ENCODE measurements at regions of chr12 and their contacts with region 1.

Region 1: GRCh38 chr12:124036674-124037109 is 63.7 kb downstream of the ZNF664 start:
- DNase-seq: peak; percentile 50
- H3K4me3 Mint-ChIP-seq: no peak overlapping the region
- H3K27ac Mint-ChIP-seq: no peak overlapping the region
- H3K4me1 Mint-ChIP-seq: peaks cover 5% of the 10 kb centered on the region
- H3K27me3 Mint-ChIP-seq: peaks cover 35% of the 10 kb centered on the region
- CTCF ChIP-seq: peak; percentile 74

Region 2: GRCh38 chr12:123655420-123655819 is 381.3 kb before region 1 on chr12:
- CTCF ChIA-PET with region 1: no interaction called
- intact Hi-C with region 1: no loop called
- DNase-seq: no peak
- H3K4me3 Mint-ChIP-seq: no peak overlapping the region
- H3K27ac Mint-ChIP-seq: no peak overlapping the region
- H3K4me1 Mint-ChIP-seq: no peaks in the 10 kb centered on the region
- H3K27me3 Mint-ChIP-seq: no peaks in the 10 kb centered on the region
- CTCF ChIP-seq: no peak

Region 3: GRCh38 chr12:123801573-123802178 is 235.0 kb before region 1 on chr12:
- CTCF ChIA-PET with region 1: no interaction called
- intact Hi-C with region 1: loop called (anchors 1 kb)
- DNase-seq: no peak
- H3K4me3 Mint-ChIP-seq: no peak overlapping the region
- H3K27ac Mint-ChIP-seq: no peak overlapping the region
- H3K4me1 Mint-ChIP-seq: no peaks in the 10 kb centered on the region
- H3K27me3 Mint-ChIP-seq: peaks cover 46% of the 10 kb centered on the region
- CTCF ChIP-seq: peak; percentile 42

Region 4: GRCh38 chr12:123905319-123905925 is 131.3 kb before region 1 on chr12:
- CTCF ChIA-PET with region 1: interaction called, 13 read pairs
- intact Hi-C with region 1: loop called (anchors 1 kb)
- DNase-seq: peak; percentile 74
- H3K4me3 Mint-ChIP-seq: no peak overlapping the region
- H3K27ac Mint-ChIP-seq: no peak overlapping the region
- H3K4me1 Mint-ChIP-seq: peaks cover 8% of the 10 kb centered on the region
- H3K27me3 Mint-ChIP-seq: peaks cover 91% of the 10 kb centered on the region
- CTCF ChIP-seq: peak; percentile 78

Region 5: GRCh38 chr12:124321040-124321481 is 284.4 kb after region 1 on chr12:
- CTCF ChIA-PET with region 1: interaction called, 3 read pairs
- intact Hi-C with region 1: loop called (anchors 1 kb)
- DNase-seq: peak; percentile 88
- H3K4me3 Mint-ChIP-seq: no peak overlapping the region
- H3K27ac Mint-ChIP-seq: no peak overlapping the region
- H3K4me1 Mint-ChIP-seq: no peaks in the 10 kb centered on the region
- H3K27me3 Mint-ChIP-seq: peaks cover 41% of the 10 kb centered on the region
- CTCF ChIP-seq: peak; percentile 87

Region 6: DNA sequence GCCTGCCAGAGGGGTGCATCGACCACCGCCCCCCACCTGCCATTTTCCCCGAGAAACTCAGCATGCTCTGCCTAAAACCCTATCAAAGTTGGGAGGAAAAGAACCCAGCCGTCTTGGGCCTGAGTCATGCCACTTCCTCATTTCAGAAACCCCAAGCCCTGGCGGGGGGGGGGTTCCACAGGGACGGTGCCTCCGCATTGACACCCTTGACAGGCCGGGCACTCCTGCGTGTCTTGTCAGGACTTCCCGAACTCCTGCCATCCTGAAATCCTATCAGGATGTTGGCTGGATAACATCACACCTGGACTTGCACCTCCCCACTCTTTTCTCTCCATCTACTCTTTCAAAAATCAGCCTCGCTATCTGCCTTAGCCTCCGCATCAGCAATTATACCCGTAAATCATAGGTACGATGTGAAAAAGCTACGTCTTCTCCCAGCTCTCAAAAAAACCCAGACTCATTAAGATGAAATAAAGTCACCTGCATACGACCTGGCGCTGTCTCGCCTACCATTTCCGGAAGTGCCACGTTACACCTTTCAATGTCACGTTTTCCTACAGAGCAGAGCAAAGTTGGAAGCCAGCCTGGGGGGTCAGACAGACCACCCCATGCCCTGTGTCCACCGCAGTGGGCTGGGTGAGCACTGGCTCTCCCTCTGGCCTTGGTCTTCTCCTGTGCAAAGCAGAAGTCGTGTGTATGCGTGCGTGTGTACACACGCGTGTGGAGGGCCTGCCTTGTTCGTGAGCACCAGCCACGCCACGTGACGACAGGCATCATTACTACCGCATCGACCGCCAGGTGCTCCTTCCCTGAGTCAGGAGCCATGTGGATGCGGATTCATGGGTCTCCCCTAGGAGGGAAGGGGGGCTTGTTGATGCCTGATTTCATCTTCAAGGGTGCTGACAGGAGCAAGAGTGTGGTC is 354.9 kb after region 1 on chr12:
- CTCF ChIA-PET with region 1: no interaction called
- intact Hi-C with region 1: loop called (anchors 10 kb)
- DNase-seq: peak; percentile 39
- H3K4me3 Mint-ChIP-seq: peak overlapping the region; percentile 8
- H3K27ac Mint-ChIP-seq: peak overlapping the region; percentile 67
- H3K4me1 Mint-ChIP-seq: peaks cover 43% of the 10 kb centered on the region
- H3K27me3 Mint-ChIP-seq: no peaks in the 10 kb centered on the region
- CTCF ChIP-seq: no peak

Region 7: DNA sequence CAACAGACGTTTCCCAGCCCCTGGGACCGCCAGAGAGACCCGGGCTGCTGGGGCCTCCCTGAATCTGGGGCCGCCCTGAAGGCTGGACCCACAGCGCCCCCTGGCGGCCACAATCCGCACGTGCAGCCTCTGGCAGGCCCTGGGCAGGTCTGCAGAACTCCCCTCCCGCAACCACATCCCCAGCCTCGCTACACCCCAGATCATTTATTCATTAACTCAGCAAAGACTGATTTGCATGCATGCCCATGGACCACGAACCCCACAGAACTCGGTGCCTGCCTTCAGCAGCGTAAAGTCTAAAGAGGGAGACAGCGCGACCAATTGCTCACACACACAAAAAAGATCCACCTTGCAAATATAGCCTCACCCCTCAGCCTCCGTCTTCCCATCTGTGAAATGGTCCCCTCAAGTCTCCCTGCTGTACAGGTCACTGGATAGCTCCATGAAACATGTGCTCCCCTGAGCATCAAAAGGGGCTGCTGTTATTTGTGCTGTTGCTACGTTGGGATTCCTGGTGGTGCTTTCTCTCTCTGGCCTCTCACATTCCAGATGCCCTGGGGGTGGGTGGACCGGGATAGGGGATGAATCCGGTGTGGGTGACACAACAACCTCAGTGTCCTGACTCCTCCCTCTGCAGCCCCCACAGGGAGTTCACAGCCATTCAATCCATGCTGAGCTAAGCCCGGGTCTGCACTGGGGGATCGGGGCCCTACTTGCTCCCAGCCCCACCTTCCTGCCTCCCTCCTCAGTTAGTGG is 730.6 kb after region 1 on chr12:
- CTCF ChIA-PET with region 1: interaction called, 5 read pairs
- intact Hi-C with region 1: loop called (anchors 1 kb)
- DNase-seq: peak; percentile 93
- H3K4me3 Mint-ChIP-seq: no peak overlapping the region
- H3K27ac Mint-ChIP-seq: peak overlapping the region; percentile 32
- H3K4me1 Mint-ChIP-seq: peaks cover 52% of the 10 kb centered on the region
- H3K27me3 Mint-ChIP-seq: peaks cover 10% of the 10 kb centered on the region
- CTCF ChIP-seq: peak; percentile 99

Region 8: DNA sequence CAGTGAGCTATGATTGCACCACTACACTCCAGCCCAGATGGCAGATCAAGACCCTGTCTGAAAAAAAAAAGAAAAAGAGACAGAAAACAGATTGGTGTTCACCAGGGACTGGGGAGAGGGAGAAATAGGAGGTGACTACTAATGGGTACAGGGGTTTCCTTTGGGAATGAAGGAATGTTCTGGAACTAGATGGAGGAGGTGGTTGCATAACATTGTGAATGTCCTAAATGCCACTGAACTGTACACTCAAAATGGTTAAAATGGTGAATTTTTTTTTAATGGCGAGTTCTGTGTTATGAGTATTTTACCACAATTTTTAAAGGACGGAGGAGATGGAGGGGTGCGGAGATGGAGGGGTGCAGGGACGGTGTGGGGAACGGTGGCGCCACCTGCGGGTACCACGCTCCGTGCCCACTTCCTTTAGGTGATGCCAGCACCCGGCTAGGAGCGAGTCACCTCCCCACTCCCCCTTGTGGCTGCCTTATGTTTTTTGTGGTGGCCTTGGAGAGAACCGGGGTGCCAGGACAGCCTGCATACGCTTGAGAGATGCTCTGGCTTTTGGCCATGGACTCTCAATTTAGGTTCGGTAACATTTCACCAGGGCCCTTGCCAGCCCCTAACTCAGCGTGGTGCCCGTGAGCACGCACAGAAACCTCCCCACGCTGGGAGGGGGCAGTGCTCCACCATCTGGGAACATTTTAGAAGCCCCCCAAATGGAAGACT is 861.7 kb after region 1 on chr12:
- CTCF ChIA-PET with region 1: no interaction called
- intact Hi-C with region 1: loop called (anchors 5 kb)
- DNase-seq: peak; percentile 82
- H3K4me3 Mint-ChIP-seq: no peak overlapping the region
- H3K27ac Mint-ChIP-seq: no peak overlapping the region
- H3K4me1 Mint-ChIP-seq: peaks cover 31% of the 10 kb centered on the region
- H3K27me3 Mint-ChIP-seq: no peaks in the 10 kb centered on the region
- CTCF ChIP-seq: peak; percentile 74

Measured in Calu3 (cell line).